CD8-positive, alpha-beta T cell (primary cell): ENCODE measurements at regions of chr1 and their contacts with region 1.

Region 1: GRCh38 chr1:116485071-116485735 is 85.6 kb downstream of the CD58 start:
- DNase-seq: peak; percentile 77 to 93 (median 87)
- ATAC-seq: peak; percentile 95
- H3K4me3 ChIP-seq: no peak overlapping the region
- H3K4me3 Mint-ChIP-seq: no peak overlapping the region
- H3K27ac ChIP-seq: no peak overlapping the region
- H3K27ac Mint-ChIP-seq: no peak overlapping the region
- H3K4me1 ChIP-seq: no peaks in the 10 kb centered on the region
- H3K4me1 Mint-ChIP-seq: no peaks in the 10 kb centered on the region
- H3K27me3 ChIP-seq: no peaks in the 10 kb centered on the region
- H3K27me3 Mint-ChIP-seq: no peaks in the 10 kb centered on the region
- CTCF ChIP-seq: peak; percentile 87

Region 2: GRCh38 chr1:116139592-116140134 is 345.5 kb before region 1 on chr1:
- CTCF ChIA-PET with region 1: interaction called, 618 read pairs
- POLR2A ChIA-PET with region 1: interaction called, 26 read pairs
- intact Hi-C with region 1: loop called (anchors 1 kb)
- DNase-seq: no peak
- ATAC-seq: no peak
- H3K4me3 ChIP-seq: no peak overlapping the region
- H3K4me3 Mint-ChIP-seq: no peak overlapping the region
- H3K27ac ChIP-seq: no peak overlapping the region
- H3K27ac Mint-ChIP-seq: no peak overlapping the region
- H3K4me1 ChIP-seq: no peaks in the 10 kb centered on the region
- H3K4me1 Mint-ChIP-seq: peaks cover 5% of the 10 kb centered on the region
- H3K27me3 ChIP-seq: no peaks in the 10 kb centered on the region
- H3K27me3 Mint-ChIP-seq: peaks cover 4% of the 10 kb centered on the region
- CTCF ChIP-seq: no peak

Region 3: GRCh38 chr1:116226017-116226416 is 259.2 kb before region 1 on chr1:
- CTCF ChIA-PET with region 1: interaction called, 136 read pairs
- POLR2A ChIA-PET with region 1: no interaction called
- intact Hi-C with region 1: no loop called
- DNase-seq: no peak
- ATAC-seq: no peak
- H3K4me3 ChIP-seq: no peak overlapping the region
- H3K4me3 Mint-ChIP-seq: no peak overlapping the region
- H3K27ac ChIP-seq: no peak overlapping the region
- H3K27ac Mint-ChIP-seq: no peak overlapping the region
- H3K4me1 ChIP-seq: no peaks in the 10 kb centered on the region
- H3K4me1 Mint-ChIP-seq: peaks cover 3% of the 10 kb centered on the region
- H3K27me3 ChIP-seq: no peaks in the 10 kb centered on the region
- H3K27me3 Mint-ChIP-seq: no peaks in the 10 kb centered on the region
- CTCF ChIP-seq: no peak

Region 4: GRCh38 chr1:116372587-116373444 is 112.4 kb before region 1 on chr1 and contains the start of gene ATP1A1:
- CTCF ChIA-PET with region 1: interaction called, 17 read pairs
- POLR2A ChIA-PET with region 1: interaction called, 3 read pairs
- intact Hi-C with region 1: no loop called
- DNase-seq: peak; percentile 93 to 99 (median 98)
- ATAC-seq: peak; percentile 66
- H3K4me3 ChIP-seq: peak within 1 kb of the TSS; percentile 73 to 80
- H3K4me3 Mint-ChIP-seq: peak within 1 kb of the TSS; percentile 96
- H3K27ac ChIP-seq: peak within 1 kb of the TSS; percentile 83 to 92
- H3K27ac Mint-ChIP-seq: peak within 1 kb of the TSS; percentile 97
- H3K4me1 ChIP-seq: peaks cover 35% of the 10 kb centered on the region
- H3K4me1 Mint-ChIP-seq: peaks cover 47% of the 10 kb centered on the region
- H3K27me3 ChIP-seq: no peaks in the 10 kb centered on the region
- H3K27me3 Mint-ChIP-seq: no peaks in the 10 kb centered on the region
- CTCF ChIP-seq: no peak
- total RNA-seq, gene ATP1A1: 204 to 211 TPM

Region 5: DNA sequence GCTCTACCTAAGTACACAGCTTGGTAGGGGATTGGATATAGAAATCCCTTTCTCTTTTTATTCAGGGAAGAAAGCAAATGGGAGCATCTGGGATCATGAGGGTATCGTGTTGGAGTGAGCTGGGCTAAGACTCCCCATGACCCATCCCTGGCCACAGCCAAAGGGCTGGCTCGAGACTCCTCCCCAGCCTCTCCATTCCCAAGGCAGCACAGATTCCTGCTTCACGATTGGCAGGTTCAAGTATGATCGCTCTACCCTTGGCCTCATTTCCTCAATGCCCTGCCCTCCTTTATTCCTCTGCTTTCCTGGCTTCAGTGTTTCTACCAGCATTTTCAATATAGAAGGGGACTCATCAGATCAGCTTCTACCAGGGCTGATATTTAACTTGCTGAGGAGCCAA is 22.5 kb before region 1 on chr1:
- CTCF ChIA-PET with region 1: interaction called, 22 read pairs
- POLR2A ChIA-PET with region 1: no interaction called
- intact Hi-C with region 1: no loop called
- DNase-seq: no peak
- ATAC-seq: no peak
- H3K4me3 ChIP-seq: no peak overlapping the region
- H3K4me3 Mint-ChIP-seq: no peak overlapping the region
- H3K27ac ChIP-seq: no peak overlapping the region
- H3K27ac Mint-ChIP-seq: no peak overlapping the region
- H3K4me1 ChIP-seq: no peaks in the 10 kb centered on the region
- H3K4me1 Mint-ChIP-seq: no peaks in the 10 kb centered on the region
- H3K27me3 ChIP-seq: no peaks in the 10 kb centered on the region
- H3K27me3 Mint-ChIP-seq: peaks cover 9% of the 10 kb centered on the region
- CTCF ChIP-seq: no peak

Region 6: GRCh38 chr1:116521186-116521585 is 36.0 kb after region 1 on chr1:
- CTCF ChIA-PET with region 1: interaction called, 12 read pairs
- POLR2A ChIA-PET with region 1: no interaction called
- intact Hi-C with region 1: no loop called
- DNase-seq: no peak
- ATAC-seq: no peak
- H3K4me3 ChIP-seq: no peak overlapping the region
- H3K4me3 Mint-ChIP-seq: no peak overlapping the region
- H3K27ac ChIP-seq: no peak overlapping the region
- H3K27ac Mint-ChIP-seq: no peak overlapping the region
- H3K4me1 ChIP-seq: no peaks in the 10 kb centered on the region
- H3K4me1 Mint-ChIP-seq: peaks cover 12% of the 10 kb centered on the region
- H3K27me3 ChIP-seq: no peaks in the 10 kb centered on the region
- H3K27me3 Mint-ChIP-seq: no peaks in the 10 kb centered on the region
- CTCF ChIP-seq: no peak